ENCODE measurements at regions of chr3 and their contacts with region 1.

Region 1: GRCh38 chr3:169149349-169149890 is 514.1 kb downstream of the MECOM start:
- DNase-seq: peak; percentile 67
- ATAC-seq: peak; percentile 93
- H3K4me3 ChIP-seq: peak overlapping the region; percentile 31 to 51
- H3K27ac ChIP-seq: no peak overlapping the region
- H3K4me1 ChIP-seq: peaks cover 2 to 24% of the 10 kb centered on the region in 2 experiments; a peak in 3 of 4 replicates
- H3K27me3 ChIP-seq: peaks cover 21% of the 10 kb centered on the region; the same call in 1 of the 2 replicates
- CTCF ChIP-seq: peak; percentile 73 to 78 (median 74)
- POLR2A ChIP-seq: no peak
- RAD21 ChIP-seq: peak; percentile 81

Region 2: GRCh38 chr3:168801794-168802193 is 347.6 kb before region 1 on chr3:
- CTCF ChIA-PET with region 1: no interaction called
- POLR2A ChIA-PET with region 1: no interaction called
- RAD21 ChIA-PET with region 1: no interaction called
- intact Hi-C with region 1: no loop called
- DNase-seq: no peak
- ATAC-seq: no peak
- H3K4me3 ChIP-seq: no peak overlapping the region
- H3K27ac ChIP-seq: no peak overlapping the region
- H3K4me1 ChIP-seq: no peaks in the 10 kb centered on the region
- H3K27me3 ChIP-seq: no peaks in the 10 kb centered on the region
- CTCF ChIP-seq: no peak
- POLR2A ChIP-seq: no peak
- RAD21 ChIP-seq: no peak

Region 3: GRCh38 chr3:169026543-169027182 is 122.8 kb before region 1 on chr3:
- CTCF ChIA-PET with region 1: no interaction called
- POLR2A ChIA-PET with region 1: no interaction called
- RAD21 ChIA-PET with region 1: no interaction called
- intact Hi-C with region 1: no loop called
- DNase-seq: peak; percentile 26
- ATAC-seq: peak; percentile 60
- H3K4me3 ChIP-seq: no peak overlapping the region
- H3K27ac ChIP-seq: no peak overlapping the region
- H3K4me1 ChIP-seq: peaks cover 0 to 11% of the 10 kb centered on the region in 2 experiments; a peak in 2 of 4 replicates
- H3K27me3 ChIP-seq: no peaks in the 10 kb centered on the region
- CTCF ChIP-seq: no peak
- POLR2A ChIP-seq: no peak
- RAD21 ChIP-seq: no peak

Region 4: GRCh38 chr3:169295126-169295525 is 145.7 kb after region 1 on chr3:
- CTCF ChIA-PET with region 1: interaction called, 3 read pairs
- POLR2A ChIA-PET with region 1: no interaction called
- RAD21 ChIA-PET with region 1: no interaction called
- intact Hi-C with region 1: loop called (anchors 2 kb)
- DNase-seq: peak; percentile 4
- ATAC-seq: no peak
- H3K4me3 ChIP-seq: no peak overlapping the region
- H3K27ac ChIP-seq: no peak overlapping the region
- H3K4me1 ChIP-seq: no peaks in the 10 kb centered on the region
- H3K27me3 ChIP-seq: no peaks in the 10 kb centered on the region
- CTCF ChIP-seq: peak; percentile 47 to 65 (median 58)
- POLR2A ChIP-seq: no peak
- RAD21 ChIP-seq: peak; percentile 61